ENCODE measurements at regions of chr18 and their contacts with region 1.

Region 1: DNA sequence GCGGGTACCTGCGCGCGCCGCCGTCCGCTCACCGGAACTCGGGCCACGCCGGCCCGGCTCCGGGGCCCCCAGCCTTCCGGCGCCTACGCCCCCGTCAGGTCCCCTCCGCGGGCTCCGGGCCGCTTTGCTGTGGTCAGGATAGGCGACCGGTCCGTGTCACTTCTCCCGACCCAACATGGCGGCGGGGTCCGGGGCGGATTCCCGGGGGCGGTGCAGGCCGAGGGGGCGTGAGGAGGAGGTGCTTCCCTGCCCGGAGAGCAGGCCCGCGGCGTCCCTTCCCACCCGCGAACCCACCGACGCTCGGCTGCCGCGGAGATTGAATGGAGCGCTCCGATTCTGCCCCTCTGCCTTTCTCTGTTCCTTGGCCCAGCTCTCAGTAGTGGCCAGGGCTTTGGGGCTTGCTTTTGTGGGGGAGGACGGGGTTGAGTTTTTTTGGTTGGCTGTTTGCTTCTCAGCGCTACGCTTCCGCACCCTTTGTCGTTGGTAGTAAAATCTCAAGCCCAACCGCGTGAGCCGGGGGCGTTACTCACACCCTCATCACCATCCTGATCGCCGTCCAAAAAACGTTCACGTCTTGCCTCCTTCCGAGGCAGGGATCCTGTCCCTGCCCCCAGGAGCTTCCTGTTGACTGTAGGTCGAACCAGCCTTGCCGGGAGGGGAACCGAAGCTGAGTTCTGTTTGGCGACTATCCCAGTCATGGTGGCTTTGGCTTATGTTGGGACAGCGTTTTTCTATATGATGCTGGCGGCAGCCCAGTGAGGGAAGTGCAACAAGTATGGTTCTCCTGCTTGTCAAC is 532 bp upstream of the YES1 start:
- DNase-seq: peak; percentile 95
- ATAC-seq: peak; percentile 67
- H3K4me3 ChIP-seq: peak overlapping the region; percentile 100
- H3K27ac ChIP-seq: peak overlapping the region; percentile 97
- H3K4me1 ChIP-seq: peaks cover 12% of the 10 kb centered on the region
- H3K27me3 ChIP-seq: no peaks in the 10 kb centered on the region
- CTCF ChIP-seq: no peak

Region 2: DNA sequence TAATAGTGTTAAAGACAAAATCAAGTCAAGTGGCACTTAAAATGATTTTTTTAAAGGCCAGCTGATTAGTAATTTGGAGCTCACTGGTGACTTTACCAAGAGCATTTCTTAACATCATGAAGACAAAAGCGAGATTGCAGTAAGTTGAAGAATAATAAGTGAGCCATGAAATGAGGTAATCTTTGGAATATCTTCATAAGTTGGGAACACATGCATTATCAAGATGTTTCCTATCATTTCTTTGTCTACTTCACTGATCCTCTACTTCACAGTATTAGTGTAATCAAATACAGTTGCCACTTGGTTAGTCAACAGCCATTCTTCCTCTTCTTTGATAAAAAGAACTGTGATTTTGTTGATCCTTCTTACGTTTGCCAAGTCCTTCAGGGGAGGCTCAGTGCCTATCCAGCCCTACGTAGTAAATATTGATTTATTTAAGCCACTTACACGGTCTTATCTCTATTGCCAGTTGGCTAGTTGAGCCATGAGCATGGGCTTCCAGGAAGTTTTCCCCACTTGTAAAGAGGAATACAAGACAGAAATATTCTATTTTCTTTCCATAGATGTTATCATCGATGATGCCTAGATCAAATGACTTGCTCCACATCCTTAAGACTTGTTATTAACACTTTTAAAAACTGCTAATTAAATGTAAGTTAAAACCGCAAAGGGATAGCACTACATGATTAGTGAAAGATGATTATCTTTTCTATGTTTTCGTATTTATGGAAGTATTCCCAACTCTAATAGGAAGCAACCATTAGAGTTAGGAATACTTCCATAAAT is 46.6 kb before region 1 on chr18:
- CTCF ChIA-PET with region 1: no interaction called
- POLR2A ChIA-PET with region 1: no interaction called
- intact Hi-C with region 1: no loop called
- DNase-seq: no peak
- ATAC-seq: no peak
- H3K4me3 ChIP-seq: no peak overlapping the region
- H3K27ac ChIP-seq: no peak overlapping the region
- H3K4me1 ChIP-seq: 0 out of 2 replicates have a peak, but pooled peaks cover 4% of the 10 kb centered on the region
- H3K27me3 ChIP-seq: no peaks in the 10 kb centered on the region
- CTCF ChIP-seq: no peak

Region 3: DNA sequence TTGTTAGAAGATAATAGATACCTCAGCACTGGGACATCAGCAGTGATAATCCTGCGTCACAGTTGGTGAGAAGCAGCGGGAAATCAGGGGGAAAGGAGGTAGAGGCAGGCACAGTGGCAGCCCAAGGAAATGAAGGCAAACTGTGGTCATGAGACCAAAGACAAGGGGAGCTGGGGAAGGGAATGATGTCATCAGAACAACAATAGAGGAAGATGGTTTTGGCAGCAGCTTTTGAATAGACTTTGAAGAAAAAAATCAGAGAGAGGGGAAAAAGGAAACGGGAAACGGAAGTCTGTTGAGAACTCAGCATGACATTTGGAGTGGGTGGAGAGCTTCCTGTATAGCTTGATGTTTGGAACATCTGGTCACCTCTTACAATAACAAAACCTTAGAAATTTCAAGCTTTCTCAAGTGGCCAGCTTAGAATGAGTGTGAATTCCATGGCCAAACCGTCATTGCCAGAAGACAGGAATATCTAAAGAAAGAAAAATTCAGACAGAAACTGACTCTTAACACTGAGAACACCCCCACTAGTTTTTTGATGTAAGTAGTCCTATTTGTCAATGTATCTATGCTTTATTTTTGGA is 17.8 kb after region 1 on chr18:
- CTCF ChIA-PET with region 1: no interaction called
- POLR2A ChIA-PET with region 1: no interaction called
- intact Hi-C with region 1: loop called (anchors 2 kb)
- DNase-seq: no peak
- ATAC-seq: peak; percentile 21; the same call in 1 of the 2 replicates
- H3K4me3 ChIP-seq: no peak overlapping the region
- H3K27ac ChIP-seq: no peak overlapping the region
- H3K4me1 ChIP-seq: peaks cover 6% of the 10 kb centered on the region; the same call in 1 of the 2 replicates
- H3K27me3 ChIP-seq: no peaks in the 10 kb centered on the region
- CTCF ChIP-seq: no peak

Measured in PC-3 (cell line).